Transverse colon (tissue), 4 donors: ENCODE measurements at regions of chr5 and their contacts with region 1.

Region 1: DNA sequence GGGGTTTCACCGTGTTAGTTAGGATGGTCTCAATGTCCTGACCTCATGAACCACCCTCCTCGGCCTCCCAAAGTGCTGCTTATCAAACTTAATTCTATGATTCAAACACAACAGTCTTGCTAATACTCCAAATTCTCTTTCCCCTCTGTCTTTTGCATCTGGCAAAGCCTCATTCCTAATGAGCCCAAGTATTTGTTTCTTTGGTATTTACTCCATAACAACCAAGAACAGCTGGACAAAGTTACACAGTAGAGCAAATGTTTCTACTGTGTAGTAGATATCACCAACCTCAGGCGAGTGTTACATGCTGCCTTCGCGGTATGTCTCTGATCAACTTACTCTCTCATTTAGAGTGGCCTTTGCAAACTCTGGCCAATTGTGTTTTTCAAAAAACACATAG is 195.8 kb upstream of the KCNN2 start:
- DNase-seq: no peak
- H3K4me3 ChIP-seq: no peak overlapping the region
- H3K27ac ChIP-seq: no peak overlapping the region
- H3K4me1 ChIP-seq: no peaks in the 10 kb centered on the region
- H3K27me3 ChIP-seq: no peaks in the 10 kb centered on the region
- CTCF ChIP-seq: no peak
- EP300 ChIP-seq: no peak
- POLR2A ChIP-seq: no peak

Region 2: GRCh38 chr5:115435778-115436712 is 1270.0 kb after region 1 on chr5:
- in situ Hi-C with region 1: no loop called
- intact Hi-C with region 1: loop called (anchors 5 kb)
- DNase-seq: no peak
- H3K4me3 ChIP-seq: no peak overlapping the region
- H3K27ac ChIP-seq: no peak overlapping the region
- H3K4me1 ChIP-seq: no peaks in the 10 kb centered on the region
- H3K27me3 ChIP-seq: no peaks in the 10 kb centered on the region
- CTCF ChIP-seq: no peak
- EP300 ChIP-seq: no peak
- POLR2A ChIP-seq: no peak